A673 (cell line): ENCODE measurements at regions of chr12 and their contacts with region 1.

Region 1: DNA sequence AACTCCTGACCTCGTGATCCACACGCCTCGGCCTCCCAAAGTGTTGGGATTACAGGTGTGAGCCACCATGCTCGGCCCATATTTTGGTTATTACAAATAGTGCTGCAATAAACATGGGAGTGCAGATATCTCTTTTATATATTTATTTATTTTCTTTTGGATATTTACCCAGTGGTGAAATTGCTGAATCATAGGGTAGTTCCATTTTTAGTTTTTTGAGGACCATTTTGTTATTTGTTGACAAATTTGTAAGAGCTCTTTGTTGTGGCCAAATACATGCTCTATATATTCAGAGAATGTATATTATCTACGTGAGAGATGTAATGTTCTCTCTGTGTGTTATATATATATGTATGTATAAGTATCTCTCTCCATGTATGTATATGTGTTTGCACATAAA is 15.9 kb downstream of the AMN1 start:
- DNase-seq: no peak
- H3K4me3 ChIP-seq: no peak overlapping the region
- H3K27ac ChIP-seq: no peak overlapping the region
- H3K4me1 ChIP-seq: no peaks in the 10 kb centered on the region
- H3K27me3 ChIP-seq: no peaks in the 10 kb centered on the region
- CTCF ChIP-seq: no peak

Region 2: GRCh38 chr12:31325877-31326631 is 386.8 kb before region 1 on chr12 and contains the start of gene SINHCAF:
- CTCF ChIA-PET with region 1: no interaction called
- POLR2A ChIA-PET with region 1: interaction called, 21 read pairs
- intact Hi-C with region 1: no loop called
- DNase-seq: peak; percentile 100
- H3K4me3 ChIP-seq: peak within 1 kb of the TSS; percentile 88
- H3K27ac ChIP-seq: peak within 1 kb of the TSS; percentile 96
- H3K4me1 ChIP-seq: peaks cover 27% of the 10 kb centered on the region
- H3K27me3 ChIP-seq: no peaks in the 10 kb centered on the region
- CTCF ChIP-seq: no peak
- total RNA-seq, gene SINHCAF: 137 and 153 TPM in 2 replicates

Region 3: DNA sequence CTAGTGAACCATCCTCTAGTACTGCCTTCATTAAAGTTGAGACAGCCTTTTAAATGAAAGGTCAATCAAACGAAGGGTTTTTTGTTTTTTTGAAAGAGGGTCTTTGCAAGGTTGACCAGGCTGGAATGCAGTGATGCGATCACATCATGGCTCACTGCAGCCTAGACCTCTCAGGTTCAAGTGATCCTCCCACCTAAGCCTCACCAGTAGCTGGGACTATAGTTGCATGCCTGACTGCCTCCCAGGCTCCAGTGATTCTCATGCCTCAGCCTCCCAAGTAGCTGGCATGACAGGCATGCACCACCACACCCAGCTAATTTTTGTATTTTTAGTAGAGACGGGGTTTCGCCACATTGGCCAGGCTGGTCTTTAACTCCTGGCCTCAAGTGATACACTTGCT is 272.3 kb before region 1 on chr12:
- CTCF ChIA-PET with region 1: no interaction called
- POLR2A ChIA-PET with region 1: no interaction called
- intact Hi-C with region 1: no loop called
- DNase-seq: no peak
- H3K4me3 ChIP-seq: no peak overlapping the region
- H3K27ac ChIP-seq: no peak overlapping the region
- H3K4me1 ChIP-seq: peaks cover 5% of the 10 kb centered on the region
- H3K27me3 ChIP-seq: no peaks in the 10 kb centered on the region
- CTCF ChIP-seq: no peak